ENCODE measurements at regions of chr6 and their contacts with region 1.

Region 1: GRCh38 chr6:106444777-106445507 is 84.4 kb downstream of the CRYBG1 start:
- DNase-seq: no peak
- ATAC-seq: peak; percentile 63

Region 2: GRCh38 chr6:106318851-106319250 is 126.1 kb before region 1 on chr6:
- intact Hi-C with region 1: no loop called
- DNase-seq: no peak
- ATAC-seq: no peak

Region 3: DNA sequence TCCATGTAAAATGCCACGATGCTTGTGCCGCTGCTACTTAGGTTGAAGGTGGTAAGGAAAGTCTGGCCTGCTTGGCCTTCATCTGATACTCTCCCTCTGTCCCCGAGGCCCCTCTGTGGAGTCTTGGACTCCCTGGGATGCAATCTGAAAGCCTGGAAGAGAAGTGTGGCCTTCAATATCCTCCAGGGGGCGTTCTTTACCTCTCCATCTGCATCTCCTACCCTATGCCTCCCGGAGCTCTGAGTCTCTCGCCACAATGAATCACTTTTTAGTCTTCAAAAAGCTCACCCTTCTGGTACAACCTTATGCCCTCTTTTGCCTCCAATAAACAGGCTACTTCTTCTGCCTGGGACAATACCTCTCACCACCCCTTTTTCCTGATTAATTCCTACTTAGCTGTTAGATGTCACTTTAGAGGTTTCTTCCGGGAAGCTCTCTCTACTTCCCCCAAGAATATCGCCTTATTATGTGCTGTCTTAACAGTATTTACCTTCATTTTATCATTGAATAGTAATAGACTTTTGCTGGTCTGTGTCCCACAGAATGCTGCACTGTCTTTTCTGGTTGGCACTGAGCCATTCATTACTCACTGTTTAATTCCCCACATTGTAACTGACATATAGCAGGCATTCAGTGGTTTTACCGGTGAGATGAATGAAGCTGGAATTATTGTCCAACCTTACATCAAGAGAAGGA is 105.5 kb before region 1 on chr6:
- intact Hi-C with region 1: loop called in 1 of 2 experiments (anchors 10 kb)
- DNase-seq: peak; percentile 42 to 44
- ATAC-seq: peak; percentile 90

Region 4: GRCh38 chr6:106560996-106561685 is 116.2 kb after region 1 on chr6:
- intact Hi-C with region 1: loop called (anchors 5 to 10 kb)
- DNase-seq: no peak
- ATAC-seq: no peak

Region 5: GRCh38 chr6:106568530-106568929 is 123.6 kb after region 1 on chr6:
- intact Hi-C with region 1: loop called (anchors 5 to 10 kb)
- DNase-seq: no peak
- ATAC-seq: no peak

Region 6: GRCh38 chr6:106731144-106731842 is 286.4 kb after region 1 on chr6:
- intact Hi-C with region 1: no loop called
- DNase-seq: peak; percentile 60 to 70
- ATAC-seq: peak; percentile 75

Region 7: DNA sequence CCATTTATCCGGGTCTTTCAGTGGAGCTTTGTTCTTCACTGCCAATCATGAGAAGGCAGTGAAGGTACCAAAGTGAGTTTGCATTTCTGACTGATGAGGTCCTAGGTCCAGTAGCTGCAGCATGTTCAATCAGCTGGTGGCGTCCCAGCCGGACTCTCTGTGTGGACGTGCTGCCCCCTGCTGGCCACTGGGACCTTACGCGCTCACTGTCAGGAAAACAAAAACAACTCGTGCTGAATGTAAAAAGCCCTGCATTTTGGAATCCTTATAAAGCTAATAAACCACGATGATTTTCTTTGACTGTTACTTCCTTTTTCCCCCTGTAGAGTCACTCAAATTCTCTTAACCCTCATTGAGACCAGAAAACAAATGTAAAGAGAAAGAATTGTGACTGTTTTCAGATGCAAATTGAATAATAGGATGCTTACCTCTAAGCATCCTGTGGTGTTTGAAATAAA is 534.5 kb after region 1 on chr6:
- intact Hi-C with region 1: loop called in 1 of 2 experiments (anchors 10 kb)
- DNase-seq: peak; percentile 73 to 93
- ATAC-seq: peak; percentile 28

Measured in left colon (tissue), 2 donors.